ENCODE measurements at regions of chr7 and their contacts with region 1.

Region 1: GRCh38 chr7:24665564-24666294 is 91.5 kb downstream of the GSDME start:
- DNase-seq: no peak
- ATAC-seq: peak; percentile 46

Region 2: DNA sequence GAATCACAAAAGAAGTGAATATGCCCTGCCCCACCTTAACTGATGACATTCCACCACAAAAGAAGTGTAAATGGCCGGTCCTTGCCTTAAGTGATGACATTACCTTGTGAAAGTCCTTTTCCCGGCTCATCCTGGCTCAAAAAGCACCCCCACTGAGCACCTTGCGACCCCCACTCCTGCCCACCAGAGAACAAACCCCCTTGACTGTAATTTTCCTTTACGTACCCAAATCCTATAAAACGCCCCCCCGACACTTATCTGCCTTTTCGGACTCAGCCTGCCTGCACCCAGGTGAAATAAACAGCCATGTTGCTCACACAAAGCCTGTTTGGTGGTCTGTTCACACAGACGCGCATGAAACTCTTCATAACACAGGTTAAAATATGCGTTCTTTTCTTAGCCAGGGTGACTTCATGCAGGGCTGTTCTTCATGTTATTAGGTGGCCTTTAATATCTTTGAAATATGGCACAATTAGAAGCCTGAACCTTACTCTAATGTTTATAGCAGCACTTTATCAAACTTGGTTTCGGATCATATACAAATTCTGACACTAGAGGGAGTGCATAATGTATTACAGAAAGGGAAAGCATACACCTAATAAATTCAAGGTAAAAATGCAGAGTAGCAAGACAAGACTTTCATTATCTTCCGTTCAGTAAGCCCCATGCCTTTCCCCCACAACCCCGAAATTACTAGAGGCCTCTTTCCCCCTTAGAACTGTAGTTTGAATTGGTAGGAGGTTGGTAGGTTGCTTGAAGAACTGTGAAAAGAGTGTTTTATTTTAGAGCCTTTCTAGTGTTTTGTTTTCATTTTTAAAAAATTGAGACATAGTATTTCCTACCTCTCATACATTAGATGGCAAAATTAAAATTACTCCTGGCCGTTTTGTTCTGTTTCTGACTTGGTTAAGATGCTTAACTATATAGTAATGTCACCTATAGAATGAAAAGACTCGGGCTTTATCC is 263.8 kb before region 1 on chr7:
- intact Hi-C with region 1: loop called (anchors 10 kb)
- DNase-seq: no peak
- ATAC-seq: no peak

Measured in left ventricle myocardium superior (tissue), 1 donor.